ENCODE measurements at regions of chr3 and their contacts with region 1.

Region 1: GRCh38 chr3:69161587-69162307 is 39.4 kb upstream of the LMOD3 start:
- DNase-seq: no peak
- ATAC-seq: peak; percentile 76

Region 2: GRCh38 chr3:69212411-69213139 is 50.8 kb after region 1 on chr3:
- intact Hi-C with region 1: no loop called
- DNase-seq: no peak
- ATAC-seq: no peak

Region 3: DNA sequence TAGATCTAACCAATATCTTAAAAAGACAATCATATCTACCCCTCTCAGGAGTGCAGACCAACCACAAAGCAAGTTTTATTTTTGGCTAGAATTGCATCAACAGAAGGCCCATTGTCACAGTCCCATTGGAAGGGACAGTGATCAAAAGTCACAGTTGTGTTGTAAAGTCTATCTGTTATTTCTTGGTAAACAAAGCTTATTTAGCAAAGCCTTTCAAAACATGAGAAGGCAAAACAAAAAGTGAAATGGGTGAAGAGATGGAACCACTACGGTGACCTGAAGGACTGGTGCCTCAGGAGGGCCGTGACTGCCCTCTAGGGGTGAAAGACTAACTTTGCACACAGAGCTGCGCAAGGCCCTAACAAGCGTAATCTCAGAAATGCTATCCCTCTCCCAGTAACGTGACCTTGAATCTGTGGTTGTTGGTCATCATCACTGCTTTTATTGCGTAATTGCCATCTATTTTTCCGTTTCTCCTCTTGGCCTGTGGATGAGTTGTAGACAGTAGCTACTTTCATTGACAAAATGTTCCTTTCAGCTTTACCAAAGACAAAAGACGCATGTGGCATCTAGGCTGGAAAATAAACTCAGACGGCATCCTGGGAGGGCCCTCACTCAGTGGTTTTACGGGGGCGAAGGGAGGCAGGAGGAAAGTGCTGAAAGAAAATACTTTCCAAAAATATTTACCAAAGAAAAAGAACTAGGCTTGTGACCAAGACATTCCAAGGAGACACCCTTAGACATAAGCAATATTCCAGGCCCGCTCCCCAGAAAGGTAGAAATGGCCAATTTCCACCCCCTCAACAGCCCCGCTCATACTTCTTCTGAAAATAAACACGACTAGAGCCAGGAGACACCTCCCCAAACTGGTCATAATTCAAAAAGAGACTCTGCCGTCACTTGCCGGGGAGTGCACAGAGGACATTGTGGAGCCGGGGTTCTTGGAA is 144.8 kb after region 1 on chr3:
- intact Hi-C with region 1: loop called (anchors 2 kb)
- DNase-seq: peak; percentile 69
- ATAC-seq: peak; percentile 96

Region 4: GRCh38 chr3:69425261-69425660 is 263.5 kb after region 1 on chr3:
- intact Hi-C with region 1: loop called (anchors 5 kb)
- DNase-seq: no peak
- ATAC-seq: no peak

Region 5: DNA sequence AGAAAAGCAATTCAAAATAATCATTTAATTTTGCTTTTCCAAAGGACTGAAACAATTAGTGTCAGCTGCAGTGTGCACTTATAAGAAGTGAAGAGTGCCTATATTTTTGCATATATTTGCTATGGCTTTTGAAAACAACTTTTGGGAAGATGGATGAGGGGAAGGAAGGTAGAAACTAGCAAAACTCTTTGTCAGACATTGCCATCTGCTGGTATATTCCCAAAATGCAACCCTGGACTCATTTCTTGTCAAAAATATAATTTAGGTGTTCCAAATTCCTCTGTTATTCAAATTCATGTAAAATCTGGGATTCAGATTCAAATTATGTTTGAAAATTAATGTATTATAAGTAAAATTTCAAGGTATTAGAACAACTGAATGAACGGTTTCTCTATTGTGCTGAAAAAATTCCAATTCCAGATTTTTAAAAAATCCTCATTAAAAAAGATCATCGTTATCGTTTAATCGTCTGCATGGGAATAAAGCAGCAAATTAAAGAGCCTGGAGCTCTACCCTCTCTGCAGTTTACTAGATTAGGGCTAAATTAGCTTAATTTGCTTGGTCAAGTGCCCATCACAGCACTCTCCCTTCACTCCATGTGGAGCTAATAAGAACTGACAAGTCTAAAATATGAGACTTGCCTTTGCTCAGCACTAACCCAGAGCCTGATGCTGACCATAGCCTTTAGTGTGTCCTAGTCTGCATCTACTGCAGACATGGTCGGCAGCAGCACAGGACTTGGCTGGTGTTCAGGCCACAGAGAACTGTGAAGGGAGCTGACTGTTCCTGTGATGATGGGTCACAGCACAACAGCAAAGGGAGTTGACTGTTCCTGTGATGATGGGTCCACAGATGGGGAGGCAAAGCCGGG is 509.6 kb after region 1 on chr3:
- intact Hi-C with region 1: loop called (anchors 5 kb)
- DNase-seq: no peak
- ATAC-seq: peak; percentile 79

Region 6: DNA sequence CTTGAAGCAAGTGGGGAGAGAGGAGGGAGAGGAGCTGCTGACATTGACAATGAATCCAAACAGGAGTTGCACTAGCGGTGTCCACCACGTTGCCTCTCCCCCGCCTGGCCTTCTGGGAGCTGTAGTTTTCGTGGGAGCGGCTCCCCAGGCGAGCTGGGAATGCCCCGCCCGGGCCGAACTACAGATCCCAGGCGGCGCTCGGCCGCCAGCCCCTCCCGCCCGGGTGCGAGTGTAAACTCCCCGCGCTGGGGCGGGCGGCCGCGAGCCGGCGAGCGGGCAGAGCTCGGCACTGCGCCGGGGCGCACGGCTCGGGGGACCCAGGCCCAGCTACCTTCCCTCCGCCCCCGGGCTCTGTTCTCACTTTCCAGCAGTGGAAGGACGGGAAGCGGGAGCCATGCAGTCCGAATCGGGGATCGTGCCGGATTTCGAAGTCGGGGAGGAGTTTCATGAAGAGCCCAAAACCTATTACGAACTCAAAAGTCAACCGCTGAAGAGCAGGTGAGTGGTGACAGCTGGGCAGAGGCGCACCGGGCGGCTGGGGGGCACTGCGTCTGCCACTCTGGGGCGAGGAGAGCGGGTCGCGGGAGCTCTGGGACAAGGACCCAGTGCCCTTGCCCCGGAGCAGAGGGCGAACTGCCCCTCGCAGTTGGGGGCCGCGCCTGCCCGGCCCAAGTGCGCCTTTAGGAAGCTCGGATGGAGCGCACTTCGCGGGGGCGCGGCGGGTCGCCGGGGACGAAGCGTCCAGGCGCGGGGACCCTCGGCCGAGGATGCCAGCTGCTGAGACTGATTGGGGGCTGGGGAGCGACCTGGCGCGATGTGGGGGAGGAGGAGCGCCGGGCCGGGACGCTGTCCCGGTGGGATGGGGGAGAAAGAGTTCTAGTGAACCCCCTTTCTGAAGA is 577.7 kb after region 1 on chr3 and contains the start of gene MITF:
- intact Hi-C with region 1: no loop called
- DNase-seq: peak; percentile 96
- ATAC-seq: peak; percentile 97
- total RNA-seq, gene MITF: 65.5 TPM

Measured in Right ventricle myocardium superior (tissue), 1 donor.